ENCODE measurements at regions of chr17 and their contacts with region 1.

Region 1: DNA sequence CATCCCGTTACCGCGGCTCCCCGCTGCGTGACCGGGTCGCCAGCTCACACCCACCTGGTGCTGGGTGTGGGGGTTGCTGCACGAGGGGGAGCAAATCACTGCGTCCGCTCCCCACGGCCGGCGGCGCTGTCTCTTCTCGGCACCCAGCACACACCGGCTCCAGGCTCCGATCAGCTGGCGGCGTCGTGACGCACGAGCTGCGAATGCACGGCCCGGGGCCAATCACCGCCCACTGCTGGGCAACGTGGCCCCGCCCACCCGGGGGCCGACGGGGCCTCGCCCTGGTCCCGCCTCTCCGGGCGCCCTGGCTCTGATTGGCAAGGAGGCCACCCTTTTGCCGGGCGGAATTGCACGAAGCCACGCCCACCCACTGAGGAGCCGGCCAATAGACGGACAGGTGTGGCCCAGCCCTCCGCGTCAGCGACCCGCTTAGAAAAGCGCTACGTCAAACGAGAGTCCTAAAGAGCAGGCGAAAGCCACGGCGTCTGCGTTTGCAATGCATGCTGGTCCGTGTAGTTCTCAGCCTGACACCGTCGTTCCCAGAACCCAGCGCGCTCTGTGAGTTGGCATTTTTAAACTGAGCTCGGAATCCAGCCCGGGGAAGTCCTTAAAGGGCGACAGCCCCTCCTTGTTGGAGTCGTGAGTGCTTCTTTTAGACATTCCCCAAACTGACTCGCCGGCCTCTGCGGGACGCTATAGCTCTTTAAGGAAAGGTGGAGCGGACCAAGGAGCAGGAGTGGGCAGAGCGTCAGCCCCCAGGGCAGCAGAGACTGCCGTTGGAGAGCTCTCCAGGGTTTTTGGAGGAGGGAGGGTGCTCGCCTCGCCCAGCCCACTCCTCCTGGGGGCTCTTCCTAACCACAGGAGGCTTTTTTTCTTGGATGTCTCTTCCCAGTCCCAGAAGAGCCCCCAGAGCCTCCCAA is 6.2 kb upstream of the TLCD2 start:
- DNase-seq: peak; percentile 100

Region 2: DNA sequence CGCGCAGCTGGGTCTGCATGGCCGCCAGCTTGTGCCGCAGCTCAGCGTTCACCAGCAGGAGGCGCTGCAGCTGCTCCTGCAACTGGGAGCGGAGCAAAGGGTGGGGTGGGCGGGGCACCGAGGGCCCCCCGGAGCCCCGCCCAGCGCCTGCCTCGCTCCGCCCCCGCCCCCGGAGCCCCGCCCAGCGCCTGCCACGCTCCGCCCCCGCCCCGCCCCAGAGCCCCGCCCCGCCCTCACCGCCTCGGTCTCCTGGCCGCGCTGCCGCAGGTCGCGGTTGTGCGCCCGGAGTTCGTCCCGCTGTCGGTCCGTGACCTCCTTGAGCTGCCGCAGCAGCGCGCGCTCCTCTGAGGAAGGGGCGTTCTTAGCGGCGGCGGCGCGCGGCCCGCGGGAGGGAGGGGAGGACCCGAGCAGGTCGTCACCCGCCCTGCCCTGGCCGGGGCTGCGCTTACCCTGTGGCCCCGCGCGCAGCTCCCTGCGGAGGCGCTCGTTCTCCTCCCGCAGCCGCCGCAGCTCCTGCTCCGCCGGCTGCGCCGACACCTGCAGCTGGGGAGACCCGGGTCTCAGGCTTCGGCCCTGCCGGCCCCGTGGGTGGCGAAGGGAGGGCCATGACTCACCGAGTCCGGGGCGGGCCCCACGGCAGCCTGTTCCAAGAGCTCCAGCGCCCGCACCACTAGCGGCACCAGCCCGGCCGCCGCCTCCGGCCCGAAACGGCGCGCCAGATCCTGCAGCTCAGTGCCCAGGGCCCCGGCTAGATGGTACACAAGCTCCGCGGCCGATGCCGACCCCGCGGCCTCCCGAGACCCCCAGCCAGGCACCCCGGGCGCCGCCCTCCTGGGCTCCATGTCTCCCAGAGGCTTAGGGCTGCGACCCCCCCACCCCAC is 67.1 kb before region 1 on chr17:
- intact Hi-C with region 1: loop called in 1 of 2 experiments (anchors 5 kb)
- DNase-seq: peak; percentile 98

Region 3: DNA sequence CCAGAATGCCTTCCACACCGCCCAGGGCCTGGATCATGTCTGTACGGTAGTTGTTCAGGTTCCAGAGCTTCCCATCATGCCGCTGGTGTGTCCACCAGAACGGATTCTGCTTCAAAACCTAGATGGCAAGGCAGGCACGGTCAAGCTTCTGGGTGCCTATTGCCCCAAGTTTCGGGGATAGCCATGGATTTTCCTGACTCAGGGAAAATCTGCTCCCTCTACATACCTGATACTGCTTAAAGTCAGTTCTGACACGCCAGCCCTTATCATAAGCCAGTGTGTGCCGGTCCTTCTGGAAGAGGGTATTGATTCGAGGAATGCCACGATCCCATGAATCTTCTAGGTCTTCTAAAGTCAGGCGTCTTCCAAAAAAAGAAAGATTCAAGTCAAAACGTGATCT is 55.3 kb before region 1 on chr17:
- intact Hi-C with region 1: loop called in 1 of 2 experiments (anchors 2 kb)
- DNase-seq: no peak

Region 4: GRCh38 chr17:2266045-2266864 is 549.9 kb after region 1 on chr17:
- intact Hi-C with region 1: loop called in 1 of 2 experiments (anchors 5 kb)
- DNase-seq: no peak

Measured in posterior vena cava (tissue), 2 donors.